Ascending aorta (tissue), 2 donors: ENCODE measurements at regions of chr19 and their contacts with region 1.

Region 1: GRCh38 chr19:58451358-58452101 is at the start of gene ZNF324B:
- DNase-seq: peak; percentile 89 to 98
- H3K4me3 ChIP-seq: peak within 1 kb of the TSS; percentile 68 to 82
- H3K27ac ChIP-seq: peak within 1 kb of the TSS; percentile 35 to 54
- H3K4me1 ChIP-seq: no peaks in the 10 kb centered on the region
- H3K27me3 ChIP-seq: no peaks in the 10 kb centered on the region
- CTCF ChIP-seq: no peak
- total RNA-seq, gene ZNF324B: 2.2 TPM

Region 2: DNA sequence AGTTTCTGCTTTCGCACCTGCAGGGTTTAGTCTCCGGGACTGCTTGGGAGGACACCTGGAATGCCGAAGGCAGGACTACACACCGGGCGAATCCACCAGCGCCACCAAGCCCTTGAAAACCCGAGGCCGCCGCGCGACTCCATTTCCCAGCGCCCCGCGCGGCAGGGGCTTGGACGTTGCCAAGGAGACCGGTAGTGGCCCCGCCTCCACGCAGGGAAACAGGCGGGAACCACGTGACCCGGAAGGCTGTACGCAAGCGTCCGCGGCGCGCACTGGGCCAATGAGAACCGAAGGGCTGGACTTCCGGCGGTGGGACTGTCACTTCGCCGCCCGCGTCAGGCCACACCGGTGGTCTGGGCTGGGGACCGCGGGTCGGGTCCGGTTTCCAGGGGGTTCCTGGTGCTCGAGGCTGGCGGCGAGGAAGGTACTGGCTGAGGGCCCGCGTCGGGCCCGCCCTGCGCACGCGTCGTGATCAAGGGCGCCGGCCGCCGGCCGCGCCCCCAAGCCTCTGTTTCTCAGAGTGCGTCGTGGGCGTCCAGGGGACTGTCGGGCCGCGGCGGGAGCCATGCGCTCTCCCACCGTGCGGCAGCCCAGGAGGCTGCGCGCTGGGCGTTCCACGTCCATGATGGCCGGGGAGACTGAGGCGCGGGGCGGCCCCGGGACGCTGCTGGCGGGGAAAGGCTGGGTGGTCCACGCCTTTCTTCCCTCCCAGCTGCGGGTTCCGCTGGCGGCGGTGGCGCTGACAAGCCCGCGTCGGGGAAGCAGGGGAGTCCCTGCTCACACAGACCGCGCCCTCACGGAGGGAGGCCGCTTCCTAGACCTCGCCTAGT is 15.4 kb after region 1 on chr19 and contains the start of gene ZNF324:
- intact Hi-C with region 1: loop called (anchors 1 kb)
- DNase-seq: peak; percentile 93 to 99
- H3K4me3 ChIP-seq: peak within 1 kb of the TSS; percentile 95 to 96
- H3K27ac ChIP-seq: peak within 1 kb of the TSS; percentile 84 to 88
- H3K4me1 ChIP-seq: peaks cover 0 to 10% of the 10 kb centered on the region in 2 donors
- H3K27me3 ChIP-seq: no peaks in the 10 kb centered on the region
- CTCF ChIP-seq: no peak
- total RNA-seq, gene ZNF324: 2.1 TPM